ENCODE measurements at regions of chrX and their contacts with region 1.

Region 1: GRCh38 chrX:150587585-150588503 is 19.4 kb downstream of the MTM1 start:
- DNase-seq: peak; percentile 11 to 67 (median 58)
- ATAC-seq: peak; percentile 56
- H3K4me3 ChIP-seq: no peak overlapping the region
- H3K4me3 Mint-ChIP-seq: no peak overlapping the region
- H3K27ac ChIP-seq: no peak overlapping the region
- H3K27ac Mint-ChIP-seq: no peak overlapping the region
- H3K4me1 ChIP-seq: no peaks in the 10 kb centered on the region
- H3K4me1 Mint-ChIP-seq: peaks cover 19% of the 10 kb centered on the region
- H3K27me3 ChIP-seq: no peaks in the 10 kb centered on the region
- H3K27me3 Mint-ChIP-seq: no peaks in the 10 kb centered on the region
- CTCF ChIP-seq: peak; percentile 83

Region 2: GRCh38 chrX:149938427-149939270 is 649.2 kb before region 1 on chrX and contains the start of gene EOLA2:
- CTCF ChIA-PET with region 1: no interaction called
- POLR2A ChIA-PET with region 1: no interaction called
- intact Hi-C with region 1: loop called in 1 of 2 experiments (anchors 5 kb)
- DNase-seq: peak; percentile 83 to 98 (median 91)
- ATAC-seq: peak; percentile 52
- H3K4me3 ChIP-seq: peak within 1 kb of the TSS; percentile 69 to 89
- H3K4me3 Mint-ChIP-seq: peak within 1 kb of the TSS; percentile 94
- H3K27ac ChIP-seq: peak within 1 kb of the TSS; percentile 92 to 99
- H3K27ac Mint-ChIP-seq: peak within 1 kb of the TSS; percentile 98
- H3K4me1 ChIP-seq: peaks cover 7% of the 10 kb centered on the region
- H3K4me1 Mint-ChIP-seq: peaks cover 3% of the 10 kb centered on the region
- H3K27me3 ChIP-seq: no peaks in the 10 kb centered on the region
- H3K27me3 Mint-ChIP-seq: no peaks in the 10 kb centered on the region
- CTCF ChIP-seq: no peak
- total RNA-seq, gene EOLA2: 43.7 to 44.4 TPM

Region 3: GRCh38 chrX:150365051-150365989 is 222.5 kb before region 1 on chrX:
- CTCF ChIA-PET with region 1: interaction called, 3 read pairs
- POLR2A ChIA-PET with region 1: no interaction called
- intact Hi-C with region 1: loop called in 1 of 2 experiments (anchors 5 kb)
- DNase-seq: peak in 8 of 9 experiments; percentile 37 to 76 (median 66)
- ATAC-seq: peak; percentile 18
- H3K4me3 ChIP-seq: peak overlapping the region; percentile 43 to 59
- H3K4me3 Mint-ChIP-seq: peak overlapping the region; percentile 86
- H3K27ac ChIP-seq: no peak overlapping the region
- H3K27ac Mint-ChIP-seq: no peak overlapping the region
- H3K4me1 ChIP-seq: peaks cover 21% of the 10 kb centered on the region
- H3K4me1 Mint-ChIP-seq: peaks cover 23% of the 10 kb centered on the region
- H3K27me3 ChIP-seq: peaks cover 0 to 4% of the 10 kb centered on the region in 2 experiments
- H3K27me3 Mint-ChIP-seq: peaks cover 7% of the 10 kb centered on the region
- CTCF ChIP-seq: peak; percentile 15

Region 4: GRCh38 chrX:150525061-150525919 is 62.6 kb before region 1 on chrX:
- CTCF ChIA-PET with region 1: no interaction called
- POLR2A ChIA-PET with region 1: no interaction called
- intact Hi-C with region 1: loop called in 1 of 2 experiments (anchors 10 kb)
- DNase-seq: no peak
- ATAC-seq: no peak
- H3K4me3 ChIP-seq: no peak overlapping the region
- H3K4me3 Mint-ChIP-seq: no peak overlapping the region
- H3K27ac ChIP-seq: no peak overlapping the region
- H3K27ac Mint-ChIP-seq: no peak overlapping the region
- H3K4me1 ChIP-seq: no peaks in the 10 kb centered on the region
- H3K4me1 Mint-ChIP-seq: no peaks in the 10 kb centered on the region
- H3K27me3 ChIP-seq: no peaks in the 10 kb centered on the region
- H3K27me3 Mint-ChIP-seq: no peaks in the 10 kb centered on the region
- CTCF ChIP-seq: no peak

Region 5: GRCh38 chrX:150575416-150575808 is 12.4 kb before region 1 on chrX:
- CTCF ChIA-PET with region 1: interaction called, 6 read pairs
- POLR2A ChIA-PET with region 1: no interaction called
- intact Hi-C with region 1: loop called in 1 of 2 experiments (anchors 2 kb)
- DNase-seq: peak in 7 of 9 experiments; percentile 15 to 78 (median 56)
- ATAC-seq: peak; percentile 81
- H3K4me3 ChIP-seq: peak overlapping the region in 1 of 2 experiments; percentile 33
- H3K4me3 Mint-ChIP-seq: peak overlapping the region; percentile 74
- H3K27ac ChIP-seq: peak overlapping the region in 1 of 2 experiments; percentile 31
- H3K27ac Mint-ChIP-seq: peak overlapping the region; percentile 88
- H3K4me1 ChIP-seq: peaks cover 71% of the 10 kb centered on the region
- H3K4me1 Mint-ChIP-seq: peaks cover 81% of the 10 kb centered on the region
- H3K27me3 ChIP-seq: no peaks in the 10 kb centered on the region
- H3K27me3 Mint-ChIP-seq: no peaks in the 10 kb centered on the region
- CTCF ChIP-seq: no peak